Natural killer cell (primary cell): ENCODE measurements at regions of chr11 and their contacts with region 1.

Region 1: DNA sequence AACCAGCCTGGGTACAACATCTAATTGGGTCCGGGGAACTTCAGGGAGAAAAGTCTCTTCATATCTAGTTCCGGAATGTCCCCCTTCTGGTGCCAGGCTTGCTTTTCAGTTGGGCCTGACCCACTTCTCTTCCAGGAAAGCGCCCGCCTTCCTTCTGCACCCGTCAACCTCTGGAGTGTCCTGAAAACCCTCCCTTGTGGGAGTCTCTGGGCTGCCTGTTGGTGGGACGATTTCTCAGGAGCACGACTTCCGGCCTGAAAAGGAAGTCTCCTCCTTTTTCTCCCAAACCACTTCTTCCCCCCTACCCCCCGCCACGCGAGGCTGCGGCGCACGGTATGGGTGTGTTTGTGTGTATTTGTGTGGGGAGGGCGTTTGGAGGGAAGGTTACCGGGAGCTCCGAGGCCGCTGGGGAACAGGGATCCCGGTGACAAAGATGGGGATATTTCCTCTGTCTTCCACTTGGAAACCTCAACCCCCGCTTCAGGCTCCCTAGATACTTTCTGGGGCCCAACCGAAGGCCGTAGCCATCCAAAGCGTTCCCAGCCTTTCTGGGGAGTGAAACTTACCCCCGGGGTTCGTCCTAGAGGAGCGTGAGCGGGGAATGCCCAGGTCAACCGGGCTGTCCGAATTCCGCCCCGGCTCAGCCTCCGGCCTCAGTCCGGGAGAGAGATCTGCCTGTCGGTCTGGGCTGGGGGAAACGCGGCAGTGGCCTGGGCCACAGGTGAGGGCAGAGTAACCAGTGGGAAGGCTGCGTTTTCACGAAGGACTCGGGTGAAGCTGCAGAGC is at the start of gene NKAPD1:
- DNase-seq: peak; percentile 79 to 92
- ATAC-seq: peak; percentile 90 to 93 (median 91)
- H3K4me3 ChIP-seq: peak within 1 kb of the TSS; percentile 97
- H3K4me3 Mint-ChIP-seq: peak within 1 kb of the TSS; percentile 94
- H3K27ac ChIP-seq: peak within 1 kb of the TSS; percentile 51
- H3K27ac Mint-ChIP-seq: peak within 1 kb of the TSS; percentile 95 to 96
- H3K4me1 ChIP-seq: peaks cover 6% of the 10 kb centered on the region
- H3K4me1 Mint-ChIP-seq: peaks cover 25 to 29% of the 10 kb centered on the region in 2 donors
- H3K27me3 ChIP-seq: peaks cover 2% of the 10 kb centered on the region
- H3K27me3 Mint-ChIP-seq: peaks cover 6 to 8% of the 10 kb centered on the region in 2 donors
- CTCF ChIP-seq: no peak
- total RNA-seq, gene NKAPD1: 12.6 to 14.9 (median 13.3) TPM

Region 2: GRCh38 chr11:111870886-111871692 is 203.1 kb before region 1 on chr11 and contains the start of gene ALG9:
- intact Hi-C with region 1: loop called (anchors 2 kb)
- DNase-seq: peak; percentile 87 to 93
- ATAC-seq: peak; percentile 87 to 90 (median 88)
- H3K4me3 ChIP-seq: peak within 1 kb of the TSS; percentile 63
- H3K4me3 Mint-ChIP-seq: peak within 1 kb of the TSS; percentile 86
- H3K27ac ChIP-seq: peak within 1 kb of the TSS; percentile 73
- H3K27ac Mint-ChIP-seq: peak within 1 kb of the TSS; percentile 86 to 94
- H3K4me1 ChIP-seq: peaks cover 9% of the 10 kb centered on the region
- H3K4me1 Mint-ChIP-seq: peaks cover 14 to 19% of the 10 kb centered on the region in 2 donors
- H3K27me3 ChIP-seq: no peaks in the 10 kb centered on the region
- H3K27me3 Mint-ChIP-seq: no peaks in the 10 kb centered on the region
- CTCF ChIP-seq: no peak
- total RNA-seq, gene ALG9: 30.6 to 37.1 (median 35.4) TPM

Region 3: DNA sequence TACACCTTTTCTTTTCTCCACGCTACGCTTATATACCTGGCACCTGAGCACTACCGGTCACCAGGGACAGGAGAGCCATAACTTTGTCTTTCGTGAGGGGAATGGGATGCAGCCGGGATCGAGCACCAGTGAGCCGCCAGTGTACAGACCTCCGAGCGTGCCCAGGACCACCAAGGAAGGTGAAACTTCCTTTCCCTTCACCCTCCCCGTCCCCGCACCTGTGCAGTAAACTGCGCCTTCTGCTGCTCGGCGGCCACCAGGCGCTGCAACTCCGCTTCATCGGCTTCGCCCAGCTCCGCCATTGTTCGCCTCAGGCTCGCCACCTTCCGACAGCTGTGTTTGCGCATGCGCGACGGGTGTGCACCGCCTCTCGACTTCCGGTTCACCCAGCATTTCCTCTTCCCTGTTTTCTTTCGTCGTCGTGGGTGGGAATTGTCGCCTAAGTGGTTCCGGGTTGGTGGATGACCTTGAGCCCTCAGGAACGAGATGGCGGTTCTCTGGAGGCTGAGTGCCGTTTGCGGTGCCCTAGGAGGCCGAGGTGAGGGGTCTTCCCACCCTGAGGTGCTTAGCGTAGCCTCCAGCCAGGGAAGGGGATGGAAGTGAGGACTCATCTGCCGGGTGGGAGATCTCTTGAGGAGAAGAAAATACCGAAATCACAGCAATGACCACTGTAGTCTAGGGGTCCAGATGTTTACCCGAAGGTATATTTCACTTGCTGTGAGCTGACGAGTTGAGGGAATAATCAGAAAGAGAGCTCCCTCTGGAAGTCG is 12.4 kb after region 1 on chr11 and contains the starts of genes SDHD and TIMM8B:
- intact Hi-C with region 1: loop called (anchors 1 kb)
- DNase-seq: peak; percentile 92 to 100
- ATAC-seq: peak; percentile 88 to 93 (median 90)
- H3K4me3 ChIP-seq: peak within 1 kb of the TSS; percentile 72
- H3K4me3 Mint-ChIP-seq: peak within 1 kb of the TSS; percentile 100
- H3K27ac ChIP-seq: peak within 1 kb of the TSS; percentile 69
- H3K27ac Mint-ChIP-seq: peak within 1 kb of the TSS; percentile 97 to 99
- H3K4me1 ChIP-seq: peaks cover 14% of the 10 kb centered on the region
- H3K4me1 Mint-ChIP-seq: peaks cover 46% of the 10 kb centered on the region in 2 donors
- H3K27me3 ChIP-seq: no peaks in the 10 kb centered on the region
- H3K27me3 Mint-ChIP-seq: no peaks in the 10 kb centered on the region
- CTCF ChIP-seq: peak; percentile 26
- total RNA-seq, gene SDHD: 46.8 to 55.0 (median 52.3) TPM
- total RNA-seq, gene TIMM8B: 14.6 to 17.8 (median 17.0) TPM